Gastrocnemius medialis (tissue), 4 donors: ENCODE measurements at regions of chr11 and their contacts with region 1.

Region 1: GRCh38 chr11:48103621-48104562 is 112.7 kb upstream of the OR4B1 start:
- DNase-seq: no peak
- ATAC-seq: peak in 1 of 2 donors; percentile 34
- H3K4me3 ChIP-seq: no peak overlapping the region
- H3K27ac ChIP-seq: peak overlapping the region; percentile 39 to 59 (median 48)
- H3K4me1 ChIP-seq: peaks cover 7 to 21% of the 10 kb centered on the region in 2 donors
- H3K27me3 ChIP-seq: no peaks in the 10 kb centered on the region
- CTCF ChIP-seq: no peak
- POLR2A ChIP-seq: no peak

Region 2: GRCh38 chr11:47946682-47947575 is 157.0 kb before region 1 on chr11:
- in situ Hi-C with region 1: no loop called
- intact Hi-C with region 1: loop called (anchors 5 kb)
- DNase-seq: peak; percentile 62 to 85
- ATAC-seq: peak; percentile 97
- H3K4me3 ChIP-seq: no peak overlapping the region
- H3K27ac ChIP-seq: peak overlapping the region; percentile 33 to 67 (median 60)
- H3K4me1 ChIP-seq: peaks cover 4 to 7% of the 10 kb centered on the region in 2 donors
- H3K27me3 ChIP-seq: no peaks in the 10 kb centered on the region
- CTCF ChIP-seq: no peak
- POLR2A ChIP-seq: no peak